Endothelial cell of umbilical vein (primary cell): ENCODE measurements at regions of chr2 and their contacts with region 1.

Region 1: DNA sequence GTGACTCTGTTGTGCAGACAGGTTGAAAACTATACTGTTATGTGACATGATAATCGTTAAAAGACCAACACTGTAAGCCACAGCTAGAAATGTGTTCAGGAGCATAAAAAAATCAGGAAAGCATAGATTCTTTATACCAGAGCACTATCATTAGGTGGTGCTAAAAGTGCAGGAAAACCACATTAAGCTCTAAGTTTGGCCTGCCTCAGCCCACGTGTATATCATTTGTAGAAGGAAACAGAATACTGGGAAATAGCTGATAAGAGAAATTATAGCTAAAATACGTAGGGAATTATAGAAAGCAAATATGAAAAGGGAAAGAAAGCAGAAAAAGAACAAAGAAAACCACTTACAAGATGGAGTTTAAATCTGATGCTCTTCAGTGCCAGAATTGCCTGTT is 26.5 kb upstream of the C2orf74 start:
- DNase-seq: peak; percentile 58
- H3K4me3 ChIP-seq: no peak overlapping the region
- H3K27ac ChIP-seq: no peak overlapping the region
- H3K4me1 ChIP-seq: no peaks in the 10 kb centered on the region
- H3K27me3 ChIP-seq: no peaks in the 10 kb centered on the region
- CTCF ChIP-seq: peak; percentile 13 to 24
- POLR2A ChIP-seq: no peak

Region 2: GRCh38 chr2:61125123-61125710 is 10.3 kb before region 1 on chr2:
- CTCF ChIA-PET with region 1: interaction called, 12 read pairs
- POLR2A ChIA-PET with region 1: no interaction called
- dilution Hi-C with region 1: no loop called
- intact Hi-C with region 1: no loop called
- DNase-seq: no peak
- H3K4me3 ChIP-seq: no peak overlapping the region
- H3K27ac ChIP-seq: no peak overlapping the region
- H3K4me1 ChIP-seq: no peaks in the 10 kb centered on the region
- H3K27me3 ChIP-seq: no peaks in the 10 kb centered on the region
- CTCF ChIP-seq: no peak
- POLR2A ChIP-seq: no peak

Region 3: GRCh38 chr2:61633250-61633649 is 497.7 kb after region 1 on chr2:
- CTCF ChIA-PET with region 1: interaction called, 56 read pairs
- POLR2A ChIA-PET with region 1: no interaction called
- dilution Hi-C with region 1: no loop called
- intact Hi-C with region 1: loop called (anchors 10 kb)
- DNase-seq: peak; percentile 18
- H3K4me3 ChIP-seq: no peak overlapping the region
- H3K27ac ChIP-seq: no peak overlapping the region
- H3K4me1 ChIP-seq: peaks cover 4% of the 10 kb centered on the region
- H3K27me3 ChIP-seq: peaks cover 0 to 3% of the 10 kb centered on the region in 2 experiments
- CTCF ChIP-seq: no peak
- POLR2A ChIP-seq: no peak

Region 4: DNA sequence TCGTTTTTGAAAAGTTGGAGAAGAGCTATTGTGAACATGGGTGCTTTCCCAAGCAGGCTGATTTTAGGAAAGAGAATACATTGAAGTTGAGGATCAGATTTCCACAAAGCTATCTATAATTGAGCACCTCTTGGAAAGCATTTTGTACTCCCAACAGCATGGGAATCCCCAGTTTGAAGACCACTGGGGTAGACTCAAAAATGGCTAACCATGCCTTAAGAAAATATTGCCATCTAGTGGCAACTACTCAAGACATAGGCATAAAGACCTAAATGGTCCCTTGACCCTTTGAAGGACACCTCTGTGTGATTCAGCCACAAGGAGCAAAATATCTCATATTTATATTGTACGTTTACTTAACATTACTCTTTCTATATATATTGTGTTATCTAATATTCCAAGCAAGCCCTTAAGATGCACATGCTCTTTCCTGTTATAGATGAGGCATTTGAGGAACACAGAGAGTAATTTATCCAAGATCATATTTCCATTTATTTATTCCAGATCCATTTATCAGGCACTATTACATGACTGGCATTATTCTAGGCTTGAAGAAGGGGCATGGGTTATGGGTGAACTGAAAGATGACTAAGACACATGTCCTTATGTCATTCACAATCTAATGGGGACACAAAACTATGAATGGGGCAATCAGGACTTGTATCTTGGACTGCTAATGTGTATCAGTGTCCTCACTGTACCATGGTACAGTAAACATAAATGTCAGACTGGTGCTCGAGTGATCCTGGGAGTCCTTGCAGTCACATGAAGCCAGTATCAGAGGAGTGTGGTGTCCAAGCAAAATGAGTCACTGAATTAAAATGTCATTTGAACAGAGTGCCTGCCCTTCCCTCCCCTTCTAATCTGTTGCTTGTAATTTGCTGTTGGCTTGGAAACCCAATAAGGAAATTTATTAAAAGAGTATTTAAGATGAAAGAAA is 523.6 kb after region 1 on chr2:
- CTCF ChIA-PET with region 1: interaction called, 36 read pairs
- POLR2A ChIA-PET with region 1: no interaction called
- dilution Hi-C with region 1: no loop called
- intact Hi-C with region 1: no loop called
- DNase-seq: peak; percentile 44
- H3K4me3 ChIP-seq: no peak overlapping the region
- H3K27ac ChIP-seq: no peak overlapping the region
- H3K4me1 ChIP-seq: no peaks in the 10 kb centered on the region
- H3K27me3 ChIP-seq: no peaks in the 10 kb centered on the region
- CTCF ChIP-seq: peak; percentile 34 to 41
- POLR2A ChIP-seq: no peak

Region 5: GRCh38 chr2:61789807-61790602 is 654.5 kb after region 1 on chr2:
- CTCF ChIA-PET with region 1: interaction called, 18 read pairs
- POLR2A ChIA-PET with region 1: no interaction called
- dilution Hi-C with region 1: no loop called
- intact Hi-C with region 1: loop called (anchors 5 kb)
- DNase-seq: no peak
- H3K4me3 ChIP-seq: no peak overlapping the region
- H3K27ac ChIP-seq: no peak overlapping the region
- H3K4me1 ChIP-seq: no peaks in the 10 kb centered on the region
- H3K27me3 ChIP-seq: peaks cover 2 to 4% of the 10 kb centered on the region in 2 experiments
- CTCF ChIP-seq: no peak
- POLR2A ChIP-seq: no peak

Region 6: DNA sequence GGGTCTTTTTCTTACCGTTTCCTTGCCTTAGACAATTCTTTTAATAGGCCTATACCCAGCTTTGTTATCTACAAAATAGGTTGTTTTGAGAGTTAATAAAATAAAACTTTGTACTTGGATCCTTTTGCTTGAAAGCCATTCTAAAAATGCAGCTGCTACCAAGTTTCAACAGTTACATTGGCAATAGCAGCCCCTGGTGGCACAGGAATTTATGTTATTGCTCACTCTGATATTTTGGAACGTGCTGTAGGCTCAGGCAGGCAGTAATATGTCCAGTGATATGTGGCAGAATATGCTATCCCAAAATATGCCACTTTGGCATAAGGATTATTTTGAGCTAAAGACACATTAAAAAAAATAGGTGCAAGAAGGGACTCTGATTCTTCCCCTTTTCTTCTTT is 763.3 kb after region 1 on chr2:
- CTCF ChIA-PET with region 1: interaction called, 12 read pairs
- POLR2A ChIA-PET with region 1: no interaction called
- dilution Hi-C with region 1: no loop called
- intact Hi-C with region 1: no loop called
- DNase-seq: peak; percentile 30
- H3K4me3 ChIP-seq: no peak overlapping the region
- H3K27ac ChIP-seq: no peak overlapping the region
- H3K4me1 ChIP-seq: no peaks in the 10 kb centered on the region
- H3K27me3 ChIP-seq: no peaks in the 10 kb centered on the region
- CTCF ChIP-seq: peak in 1 of 2 donors; percentile 37
- POLR2A ChIP-seq: no peak